HEK293 (cell line): ENCODE measurements at regions of chr6 and their contacts with region 1.

Region 1: GRCh38 chr6:151675746-151676416 is 131.6 kb upstream of the ESR1 start:
- H3K4me3 ChIP-seq: no peak overlapping the region
- H3K27ac ChIP-seq: no peak overlapping the region
- H3K4me1 ChIP-seq: no peaks in the 10 kb centered on the region
- CTCF ChIP-seq: peak; percentile 85

Region 2: GRCh38 chr6:151658088-151658487 is 17.8 kb before region 1 on chr6:
- CTCF ChIA-PET with region 1: interaction called, 10 read pairs
- POLR2A ChIA-PET with region 1: no interaction called
- H3K4me3 ChIP-seq: no peak overlapping the region
- H3K27ac ChIP-seq: no peak overlapping the region
- H3K4me1 ChIP-seq: no peaks in the 10 kb centered on the region
- CTCF ChIP-seq: no peak

Region 3: GRCh38 chr6:151665317-151665716 is 10.6 kb before region 1 on chr6:
- CTCF ChIA-PET with region 1: interaction called, 13 read pairs
- POLR2A ChIA-PET with region 1: no interaction called
- H3K4me3 ChIP-seq: no peak overlapping the region
- H3K27ac ChIP-seq: no peak overlapping the region
- H3K4me1 ChIP-seq: no peaks in the 10 kb centered on the region
- CTCF ChIP-seq: no peak

Region 4: GRCh38 chr6:151690768-151691562 is 15.1 kb after region 1 on chr6:
- CTCF ChIA-PET with region 1: interaction called, 12 read pairs
- POLR2A ChIA-PET with region 1: no interaction called
- H3K4me3 ChIP-seq: no peak overlapping the region
- H3K27ac ChIP-seq: no peak overlapping the region
- H3K4me1 ChIP-seq: 0 out of 2 replicates have a peak, but pooled peaks cover 2% of the 10 kb centered on the region
- CTCF ChIP-seq: no peak

Region 5: DNA sequence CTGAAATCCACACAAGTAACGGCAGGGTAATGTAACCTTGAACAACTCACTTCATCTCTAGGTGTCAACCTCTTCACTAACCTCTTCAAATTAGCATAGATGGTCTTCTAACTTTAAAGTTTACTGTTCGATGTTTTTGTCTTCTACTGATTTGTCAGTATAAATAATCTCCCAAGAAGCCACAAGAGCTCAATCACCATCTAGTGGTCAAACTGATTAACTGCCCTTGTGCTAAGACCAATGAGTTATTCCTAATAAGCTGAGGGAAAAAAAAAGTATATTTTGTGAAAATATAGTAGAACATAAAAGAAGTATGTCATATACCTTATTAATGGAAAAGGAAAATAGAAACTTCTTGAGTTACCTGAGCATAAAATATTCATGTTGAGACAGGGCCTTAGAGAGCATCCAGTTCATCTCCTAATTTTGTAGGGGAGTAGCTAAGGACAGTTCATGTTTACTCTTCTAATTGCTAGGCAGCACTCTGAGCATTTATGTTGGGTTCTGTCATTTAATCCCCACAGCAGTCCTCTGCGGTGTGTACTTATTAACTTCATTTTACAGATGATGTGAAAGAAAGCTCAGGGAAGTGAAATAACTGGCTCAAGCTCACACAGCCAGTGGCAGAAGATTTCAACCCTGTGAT is 448.7 kb after region 1 on chr6:
- CTCF ChIA-PET with region 1: interaction called, 15 read pairs
- POLR2A ChIA-PET with region 1: no interaction called
- H3K4me3 ChIP-seq: no peak overlapping the region
- H3K27ac ChIP-seq: no peak overlapping the region
- H3K4me1 ChIP-seq: no peaks in the 10 kb centered on the region
- CTCF ChIP-seq: peak; percentile 22; the same call in 1 of the 2 replicates